Esophagus muscularis mucosa (tissue), 4 donors: ENCODE measurements at regions of chr3 and their contacts with region 1.

Region 1: GRCh38 chr3:49906004-49906743 is 2.5 kb upstream of the MST1R start:
- DNase-seq: no peak
- H3K4me3 ChIP-seq: peak overlapping the region; percentile 34 to 52 (median 38)
- H3K27ac ChIP-seq: peak overlapping the region; percentile 37 to 58 (median 50)
- H3K4me1 ChIP-seq: peaks cover 27 to 53% (median 44%) of the 10 kb centered on the region in 4 donors
- H3K27me3 ChIP-seq: no peaks in the 10 kb centered on the region
- CTCF ChIP-seq: peak; percentile 65 to 73 (median 65)
- EP300 ChIP-seq: no peak
- POLR2A ChIP-seq: no peak

Region 2: GRCh38 chr3:49802719-49803464 is 103.3 kb before region 1 on chr3 and contains the start of gene INKA1:
- intact Hi-C with region 1: loop called (anchors 2 kb)
- DNase-seq: peak; percentile 97
- H3K4me3 ChIP-seq: peak within 1 kb of the TSS; percentile 70 to 99 (median 85)
- H3K27ac ChIP-seq: peak within 1 kb of the TSS; percentile 87 to 98 (median 91)
- H3K4me1 ChIP-seq: peaks cover 46 to 65% (median 62%) of the 10 kb centered on the region in 4 donors
- H3K27me3 ChIP-seq: peaks cover 0 to 4% (median 0%) of the 10 kb centered on the region in 4 donors
- CTCF ChIP-seq: peak; percentile 88 to 94 (median 90)
- EP300 ChIP-seq: no peak
- POLR2A ChIP-seq: peak; percentile 29
- total RNA-seq, gene INKA1: 3.3 to 5.8 (median 4.0) TPM

Region 3: GRCh38 chr3:49856181-49857005 is 49.8 kb before region 1 on chr3 and contains the start of gene TRAIP:
- intact Hi-C with region 1: loop called (anchors 5 kb)
- DNase-seq: peak; percentile 99
- H3K4me3 ChIP-seq: peak within 1 kb of the TSS; percentile 59 to 80 (median 61)
- H3K27ac ChIP-seq: peak within 1 kb of the TSS; percentile 75 to 81 (median 79)
- H3K4me1 ChIP-seq: peaks cover 6 to 16% (median 12%) of the 10 kb centered on the region in 4 donors
- H3K27me3 ChIP-seq: no peaks in the 10 kb centered on the region
- CTCF ChIP-seq: no peak
- EP300 ChIP-seq: no peak
- POLR2A ChIP-seq: no peak
- total RNA-seq, gene TRAIP: 0.84 to 1.4 (median 1.3) TPM in 3 of 4 donors, not detected in the other

Region 4: DNA sequence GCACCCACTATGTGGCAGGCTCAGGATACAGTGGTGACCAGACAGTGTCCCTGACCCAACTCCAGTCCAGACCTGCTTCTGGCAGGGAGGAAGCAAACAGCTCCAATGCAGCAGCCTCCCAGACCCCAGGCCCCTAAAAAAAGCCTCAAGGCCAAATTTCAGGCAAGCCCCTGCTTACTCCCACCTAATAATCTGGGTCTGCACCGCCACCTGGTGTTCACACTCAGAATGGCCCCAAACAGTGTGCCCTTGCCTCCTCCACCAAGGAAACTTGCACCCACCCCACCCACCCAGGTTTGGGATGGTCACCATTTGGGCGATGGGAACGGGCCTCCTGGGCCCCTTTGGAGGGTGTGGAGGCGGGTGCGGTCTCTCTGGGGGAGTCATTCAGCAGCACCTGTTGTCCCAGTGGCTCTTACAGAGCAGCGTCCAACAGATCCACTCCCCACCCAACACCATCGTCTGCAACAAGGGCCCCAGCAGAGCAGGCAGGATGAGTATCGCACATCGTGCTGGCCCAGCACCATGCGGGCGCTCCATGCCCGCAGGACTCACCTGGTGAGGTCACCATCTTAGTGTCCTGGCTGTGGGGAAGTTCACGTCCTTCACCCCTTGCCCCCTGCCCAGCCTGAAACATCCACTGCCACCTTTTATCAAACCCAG is 644.0 kb after region 1 on chr3:
- intact Hi-C with region 1: no loop called
- DNase-seq: no peak
- H3K4me3 ChIP-seq: no peak overlapping the region
- H3K27ac ChIP-seq: no peak overlapping the region
- H3K4me1 ChIP-seq: no peaks in the 10 kb centered on the region
- H3K27me3 ChIP-seq: peaks cover 0 to 5% (median 0%) of the 10 kb centered on the region in 4 donors
- CTCF ChIP-seq: peak; percentile 66 to 87 (median 69)
- EP300 ChIP-seq: no peak
- POLR2A ChIP-seq: no peak